CD4-positive, alpha-beta T cell (primary cell): ENCODE measurements at regions of chr12 and their contacts with region 1.

Region 1: GRCh38 chr12:57005980-57006808 is at the start of gene ZBTB39:
- DNase-seq: peak; percentile 32 to 90 (median 60)
- ATAC-seq: peak; percentile 74
- H3K4me3 ChIP-seq: peak within 1 kb of the TSS; percentile 76
- H3K4me3 Mint-ChIP-seq: peak within 1 kb of the TSS; percentile 93
- H3K27ac ChIP-seq: peak within 1 kb of the TSS; percentile 33 to 47
- H3K27ac Mint-ChIP-seq: peak within 1 kb of the TSS; percentile 81
- H3K4me1 ChIP-seq: peaks cover 51% of the 10 kb centered on the region
- H3K4me1 Mint-ChIP-seq: peaks cover 66% of the 10 kb centered on the region
- H3K27me3 ChIP-seq: no peaks in the 10 kb centered on the region
- H3K27me3 Mint-ChIP-seq: no peaks in the 10 kb centered on the region
- CTCF ChIP-seq: peak; percentile 49
- total RNA-seq, gene ZBTB39: 6.9 to 8.0 TPM

Region 2: DNA sequence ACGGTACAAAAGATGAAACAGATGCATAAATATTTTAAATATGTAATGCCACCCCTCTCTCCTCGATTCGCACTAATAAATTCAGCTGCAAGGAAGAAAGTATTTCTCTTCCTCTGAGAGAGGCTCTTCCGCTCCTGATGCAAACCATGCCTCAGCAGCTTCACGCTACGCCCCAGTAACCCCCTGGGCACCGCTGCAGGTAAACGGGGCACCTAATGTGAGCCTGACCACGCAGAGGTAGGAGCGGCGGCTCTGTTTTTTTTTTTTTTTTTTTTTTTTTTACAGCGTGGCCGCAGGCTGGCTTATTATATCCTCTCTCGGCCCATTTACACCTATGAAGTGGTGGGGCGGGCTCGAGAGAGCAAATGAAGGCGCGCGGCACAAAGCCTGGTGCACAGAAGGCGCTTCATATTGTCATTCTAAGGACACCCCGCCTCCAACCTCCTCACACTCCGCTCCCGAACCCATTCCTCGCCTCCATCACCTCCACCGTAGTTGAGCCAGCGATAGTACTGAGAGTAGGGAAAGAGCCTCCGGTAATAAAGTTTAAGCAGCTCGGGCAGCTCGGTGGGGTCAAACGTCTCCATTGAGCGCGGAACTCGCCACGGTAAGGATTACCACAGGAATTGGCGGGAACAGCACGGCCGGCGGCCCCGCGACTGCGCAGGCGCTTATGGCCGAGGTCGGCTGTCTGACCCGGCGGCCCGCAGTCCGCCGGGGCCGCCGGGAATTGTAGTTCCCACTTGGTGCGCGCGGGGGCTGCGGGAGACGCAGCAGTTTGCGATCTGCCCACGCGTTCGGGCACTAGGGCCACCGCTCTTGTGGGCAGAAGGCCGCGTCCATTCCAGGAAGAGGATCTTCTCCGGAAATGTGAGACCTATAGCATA is 254.2 kb before region 1 on chr12 and contains the start of gene PRIM1:
- CTCF ChIA-PET with region 1: interaction called, 15 read pairs
- POLR2A ChIA-PET with region 1: no interaction called
- intact Hi-C with region 1: loop called (anchors 5 kb)
- DNase-seq: peak; percentile 66 to 91 (median 78)
- ATAC-seq: peak; percentile 80
- H3K4me3 ChIP-seq: peak within 1 kb of the TSS; percentile 96
- H3K4me3 Mint-ChIP-seq: peak within 1 kb of the TSS; percentile 98
- H3K27ac ChIP-seq: peak within 1 kb of the TSS; percentile 68 to 80
- H3K27ac Mint-ChIP-seq: peak within 1 kb of the TSS; percentile 95
- H3K4me1 ChIP-seq: peaks cover 10% of the 10 kb centered on the region
- H3K4me1 Mint-ChIP-seq: peaks cover 33% of the 10 kb centered on the region
- H3K27me3 ChIP-seq: no peaks in the 10 kb centered on the region
- H3K27me3 Mint-ChIP-seq: no peaks in the 10 kb centered on the region
- CTCF ChIP-seq: peak; percentile 41
- total RNA-seq, gene PRIM1: 5.3 to 6.1 TPM

Region 3: DNA sequence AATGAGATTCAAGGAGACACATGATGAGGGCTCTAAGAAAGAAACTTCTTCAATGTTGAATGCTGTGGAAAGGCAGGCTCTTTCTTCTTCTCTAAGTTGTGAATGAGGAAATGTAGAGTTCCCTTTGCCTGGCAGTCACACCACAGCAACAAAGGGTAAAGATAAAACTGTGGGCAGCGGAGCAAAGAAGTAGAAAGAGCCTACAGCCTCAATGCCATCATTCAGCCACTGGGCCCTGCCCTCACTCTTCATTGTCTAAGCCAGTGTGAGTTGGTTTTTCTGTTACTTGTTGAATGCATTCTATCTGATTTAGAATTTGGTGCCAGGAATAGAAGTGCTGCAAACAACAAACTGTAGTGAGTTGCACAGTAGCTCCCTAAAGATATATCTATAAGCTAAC is 84.2 kb before region 1 on chr12:
- CTCF ChIA-PET with region 1: no interaction called
- POLR2A ChIA-PET with region 1: no interaction called
- intact Hi-C with region 1: no loop called
- DNase-seq: no peak
- ATAC-seq: no peak
- H3K4me3 ChIP-seq: no peak overlapping the region
- H3K4me3 Mint-ChIP-seq: no peak overlapping the region
- H3K27ac ChIP-seq: no peak overlapping the region
- H3K27ac Mint-ChIP-seq: no peak overlapping the region
- H3K4me1 ChIP-seq: no peaks in the 10 kb centered on the region
- H3K4me1 Mint-ChIP-seq: no peaks in the 10 kb centered on the region
- H3K27me3 ChIP-seq: peaks cover 0 to 5% of the 10 kb centered on the region in 2 experiments
- H3K27me3 Mint-ChIP-seq: peaks cover under 1% of the 10 kb centered on the region
- CTCF ChIP-seq: no peak

Region 4: GRCh38 chr12:58034311-58035098 is 1028.3 kb after region 1 on chr12:
- CTCF ChIA-PET with region 1: no interaction called
- POLR2A ChIA-PET with region 1: no interaction called
- intact Hi-C with region 1: no loop called
- DNase-seq: no peak
- ATAC-seq: no peak
- H3K4me3 ChIP-seq: no peak overlapping the region
- H3K4me3 Mint-ChIP-seq: no peak overlapping the region
- H3K27ac ChIP-seq: no peak overlapping the region
- H3K27ac Mint-ChIP-seq: no peak overlapping the region
- H3K4me1 ChIP-seq: no peaks in the 10 kb centered on the region
- H3K4me1 Mint-ChIP-seq: no peaks in the 10 kb centered on the region
- H3K27me3 ChIP-seq: no peaks in the 10 kb centered on the region
- H3K27me3 Mint-ChIP-seq: peaks cover 9% of the 10 kb centered on the region
- CTCF ChIP-seq: no peak